ENCODE measurements at regions of chr1 and their contacts with region 1.

Region 1: GRCh38 chr1:65309304-65310077 is at the start of gene DNAJC6:
- DNase-seq: peak; percentile 71 to 81
- H3K4me3 ChIP-seq: peak within 1 kb of the TSS; percentile 14 to 29 (median 25)
- H3K27ac ChIP-seq: no peak within 1 kb of the TSS
- H3K4me1 ChIP-seq: peaks cover 0 to 15% of the 10 kb centered on the region in 2 donors
- H3K27me3 ChIP-seq: no peaks in the 10 kb centered on the region
- CTCF ChIP-seq: no peak
- POLR2A ChIP-seq: no peak
- total RNA-seq, gene DNAJC6: 2.8 to 9.2 (median 5.3) TPM

Region 2: GRCh38 chr1:65083263-65083896 is 226.1 kb before region 1 on chr1:
- intact Hi-C with region 1: no loop called
- DNase-seq: no peak
- H3K4me3 ChIP-seq: no peak overlapping the region
- H3K27ac ChIP-seq: no peak overlapping the region
- H3K4me1 ChIP-seq: no peaks in the 10 kb centered on the region
- H3K27me3 ChIP-seq: no peaks in the 10 kb centered on the region
- CTCF ChIP-seq: no peak
- POLR2A ChIP-seq: no peak

Region 3: GRCh38 chr1:65148548-65149350 is 160.7 kb before region 1 on chr1:
- intact Hi-C with region 1: no loop called
- DNase-seq: peak; percentile 32 to 34
- H3K4me3 ChIP-seq: peak overlapping the region; percentile 64 to 76 (median 68)
- H3K27ac ChIP-seq: peak overlapping the region in 2 of 3 donors; percentile 19 to 21
- H3K4me1 ChIP-seq: peaks cover 0 to 5% of the 10 kb centered on the region in 2 donors
- H3K27me3 ChIP-seq: no peaks in the 10 kb centered on the region
- CTCF ChIP-seq: no peak
- POLR2A ChIP-seq: peak in 1 of 2 donors; percentile 19

Region 4: GRCh38 chr1:65243491-65243890 is 66.0 kb before region 1 on chr1:
- intact Hi-C with region 1: no loop called
- DNase-seq: no peak
- H3K4me3 ChIP-seq: no peak overlapping the region
- H3K27ac ChIP-seq: no peak overlapping the region
- H3K4me1 ChIP-seq: peaks cover 0 to 9% of the 10 kb centered on the region in 2 donors
- H3K27me3 ChIP-seq: no peaks in the 10 kb centered on the region
- CTCF ChIP-seq: no peak
- POLR2A ChIP-seq: no peak

Region 5: DNA sequence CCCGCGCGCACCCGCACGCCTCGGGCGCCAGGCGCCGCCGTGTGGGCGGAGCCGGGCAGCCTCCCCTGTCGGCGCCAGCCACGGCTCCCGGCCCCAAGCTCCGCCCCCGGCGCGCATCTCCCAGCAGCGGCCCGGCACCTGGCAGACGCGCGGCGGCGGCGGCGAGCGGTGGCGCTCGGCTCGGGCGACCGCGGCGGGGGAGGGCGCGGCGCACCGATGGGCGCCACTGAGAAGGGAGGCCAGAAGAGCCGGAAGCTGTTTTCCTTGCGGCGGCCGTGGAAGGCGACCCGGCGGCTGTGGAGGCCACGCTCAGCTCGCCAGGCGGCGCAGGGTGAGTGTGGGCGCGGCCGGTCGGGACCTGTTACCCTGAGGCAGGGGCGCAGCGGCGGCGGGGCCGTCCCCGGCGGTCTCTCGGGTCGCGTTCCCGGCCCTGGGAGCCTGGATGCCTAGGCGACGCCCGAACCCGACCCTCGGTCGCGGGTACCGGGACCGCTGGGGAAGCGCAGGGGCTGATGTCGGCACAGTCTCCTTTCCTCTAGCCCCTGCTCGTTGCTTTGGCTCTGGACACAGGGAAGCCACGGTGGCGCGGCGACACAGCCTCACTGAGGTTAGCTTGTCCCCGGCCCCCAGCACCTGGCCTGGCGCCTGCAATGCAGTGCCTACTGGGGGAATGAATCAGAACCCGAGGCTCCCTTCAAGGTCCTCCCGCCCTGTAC is 55.0 kb before region 1 on chr1:
- intact Hi-C with region 1: loop called (anchors 10 kb)
- DNase-seq: peak; percentile 86 to 87
- H3K4me3 ChIP-seq: peak overlapping the region; percentile 35 to 76 (median 51)
- H3K27ac ChIP-seq: peak overlapping the region in 1 of 3 donors; percentile 41
- H3K4me1 ChIP-seq: peaks cover 0 to 13% of the 10 kb centered on the region in 2 donors
- H3K27me3 ChIP-seq: no peaks in the 10 kb centered on the region
- CTCF ChIP-seq: peak in 3 of 6 experiments; percentile 12 to 21 (median 21)
- POLR2A ChIP-seq: peak in 1 of 2 donors; percentile 86